Common myeloid progenitor, CD34-positive (primary cell): ENCODE measurements at regions of chr6 and their contacts with region 1.

Region 1: DNA sequence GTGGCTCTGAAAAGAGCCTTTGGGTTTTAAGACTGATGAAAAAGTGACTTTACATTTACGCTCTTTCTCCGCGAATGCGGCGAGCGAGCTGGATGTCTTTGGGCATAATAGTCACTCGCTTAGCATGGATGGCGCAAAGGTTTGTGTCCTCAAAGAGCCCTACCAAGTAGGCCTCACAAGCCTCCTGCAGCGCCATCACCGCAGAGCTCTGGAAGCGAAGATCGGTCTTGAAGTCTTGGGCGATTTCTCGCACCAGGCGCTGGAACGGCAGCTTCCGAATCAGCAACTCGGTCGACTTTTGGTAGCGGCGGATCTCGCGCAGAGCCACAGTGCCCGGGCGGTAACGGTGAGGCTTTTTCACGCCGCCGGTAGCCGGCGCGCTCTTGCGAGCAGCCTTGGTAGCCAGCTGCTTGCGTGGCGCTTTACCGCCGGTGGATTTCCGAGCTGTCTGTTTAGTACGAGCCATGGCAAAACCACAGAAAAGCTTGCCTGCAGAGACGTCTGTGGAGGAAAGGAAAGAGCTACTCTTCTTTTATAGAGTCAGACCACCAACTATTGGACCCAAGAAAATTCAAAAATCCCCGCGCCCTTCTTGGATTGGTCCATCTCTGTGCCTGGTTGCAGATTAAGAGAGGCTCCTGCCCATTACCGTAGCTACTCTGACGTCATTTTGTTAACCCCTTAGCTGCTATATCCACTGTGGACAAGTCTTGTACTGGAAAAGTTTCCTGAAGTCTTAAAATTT is 55.5 kb upstream of the HFE start:
- DNase-seq: peak; percentile 95 to 97 (median 97)
- H3K4me3 ChIP-seq: peak overlapping the region; percentile 41 to 87 (median 80)
- H3K27ac ChIP-seq: peak overlapping the region; percentile 17 to 83
- H3K4me1 ChIP-seq: peaks cover 24 to 81% (median 42%) of the 10 kb centered on the region in 4 experiments
- H3K27me3 ChIP-seq: no peaks in the 10 kb centered on the region

Region 2: GRCh38 chr6:26003102-26003694 is 28.6 kb before region 1 on chr6:
- CTCF ChIA-PET with region 1: interaction called, 264 read pairs
- POLR2A ChIA-PET with region 1: no interaction called
- DNase-seq: peak; percentile 54 to 63 (median 61)
- H3K4me3 ChIP-seq: no peak overlapping the region
- H3K27ac ChIP-seq: no peak overlapping the region
- H3K4me1 ChIP-seq: peaks cover 0 to 10% (median 4%) of the 10 kb centered on the region in 4 experiments
- H3K27me3 ChIP-seq: no peaks in the 10 kb centered on the region

Region 3: DNA sequence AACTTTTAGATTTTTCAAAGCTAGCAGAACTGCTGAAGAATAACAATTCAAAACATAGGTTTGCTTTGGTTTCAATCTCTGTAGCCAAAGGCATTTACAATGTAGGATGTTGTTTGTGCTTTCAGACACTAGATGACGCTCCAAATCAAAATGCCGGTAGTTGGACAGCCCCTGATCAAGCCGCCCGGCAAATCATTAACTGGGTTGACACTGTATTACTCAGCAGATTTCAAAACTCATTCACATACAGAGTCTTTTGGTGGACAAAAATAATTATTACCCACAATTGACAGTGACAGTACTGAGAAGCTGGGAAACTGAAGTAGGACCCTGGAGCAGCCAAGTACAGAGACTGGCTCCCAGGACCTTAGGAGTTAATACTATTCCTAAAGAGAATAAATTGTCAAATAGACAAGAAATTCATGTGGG is 34.2 kb after region 1 on chr6:
- CTCF ChIA-PET with region 1: interaction called, 16 read pairs
- POLR2A ChIA-PET with region 1: no interaction called
- DNase-seq: peak; percentile 84 to 95 (median 93)
- H3K4me3 ChIP-seq: peak overlapping the region in 1 of 7 experiments; percentile 28
- H3K27ac ChIP-seq: no peak overlapping the region
- H3K4me1 ChIP-seq: peaks cover 0 to 7% (median 3%) of the 10 kb centered on the region in 4 experiments
- H3K27me3 ChIP-seq: no peaks in the 10 kb centered on the region

Region 4: GRCh38 chr6:26241033-26241895 is 209.5 kb after region 1 on chr6:
- CTCF ChIA-PET with region 1: no interaction called
- POLR2A ChIA-PET with region 1: no interaction called
- DNase-seq: peak; percentile 54 to 89 (median 78)
- H3K4me3 ChIP-seq: peak overlapping the region in 6 of 7 experiments; percentile 54 to 89 (median 85)
- H3K27ac ChIP-seq: peak overlapping the region; percentile 86 to 92
- H3K4me1 ChIP-seq: peaks cover 0 to 12% (median 4%) of the 10 kb centered on the region in 4 experiments
- H3K27me3 ChIP-seq: no peaks in the 10 kb centered on the region